Heart left ventricle (tissue), 16 donors: ENCODE measurements at regions of chr1 and their contacts with region 1.

Region 1: GRCh38 chr1:241611063-241611462 is 29.1 kb downstream of the CHML start:
- DNase-seq: no peak
- ATAC-seq: peak; percentile 78 to 91 (median 82)
- H3K4me3 ChIP-seq: no peak overlapping the region
- H3K27ac ChIP-seq: no peak overlapping the region
- H3K4me1 ChIP-seq: peaks cover 0 to 12% (median 0%) of the 10 kb centered on the region in 12 donors
- H3K27me3 ChIP-seq: no peaks in the 10 kb centered on the region
- CTCF ChIP-seq: peak; percentile 52 to 80 (median 68)
- POLR2A ChIP-seq: no peak

Region 2: DNA sequence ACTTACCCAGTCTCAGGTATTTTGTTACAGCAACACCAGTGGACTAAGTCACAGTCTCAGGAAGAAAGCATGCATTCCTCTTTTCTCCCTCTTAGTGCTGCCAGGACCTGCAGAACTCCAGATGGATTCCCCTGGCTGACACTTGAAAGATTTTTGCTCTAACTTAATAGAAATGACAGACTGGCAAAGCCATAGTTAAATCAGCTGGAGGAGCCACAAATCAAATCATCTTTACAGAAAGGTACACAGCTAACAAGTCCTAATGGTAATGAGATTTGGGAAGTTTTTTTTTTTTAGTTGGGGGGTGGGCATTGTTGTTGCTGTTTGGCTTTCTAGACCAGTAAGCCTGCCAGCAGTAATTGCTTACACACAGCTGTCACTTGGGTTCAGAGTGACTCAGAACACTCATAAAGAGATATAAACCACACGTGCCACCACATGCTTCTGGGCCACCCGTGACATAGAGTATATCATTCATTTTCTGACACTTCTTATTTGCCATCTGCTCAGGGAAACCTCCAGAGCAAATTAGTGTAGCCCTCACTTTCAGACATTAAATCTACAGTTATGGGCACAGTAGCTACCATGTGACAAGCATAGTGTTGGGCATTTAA is 163.9 kb before region 1 on chr1:
- intact Hi-C with region 1: no loop called
- DNase-seq: no peak
- ATAC-seq: no peak
- H3K4me3 ChIP-seq: no peak overlapping the region
- H3K27ac ChIP-seq: no peak overlapping the region
- H3K4me1 ChIP-seq: no peaks in the 10 kb centered on the region
- H3K27me3 ChIP-seq: no peaks in the 10 kb centered on the region
- CTCF ChIP-seq: no peak
- POLR2A ChIP-seq: no peak

Region 3: DNA sequence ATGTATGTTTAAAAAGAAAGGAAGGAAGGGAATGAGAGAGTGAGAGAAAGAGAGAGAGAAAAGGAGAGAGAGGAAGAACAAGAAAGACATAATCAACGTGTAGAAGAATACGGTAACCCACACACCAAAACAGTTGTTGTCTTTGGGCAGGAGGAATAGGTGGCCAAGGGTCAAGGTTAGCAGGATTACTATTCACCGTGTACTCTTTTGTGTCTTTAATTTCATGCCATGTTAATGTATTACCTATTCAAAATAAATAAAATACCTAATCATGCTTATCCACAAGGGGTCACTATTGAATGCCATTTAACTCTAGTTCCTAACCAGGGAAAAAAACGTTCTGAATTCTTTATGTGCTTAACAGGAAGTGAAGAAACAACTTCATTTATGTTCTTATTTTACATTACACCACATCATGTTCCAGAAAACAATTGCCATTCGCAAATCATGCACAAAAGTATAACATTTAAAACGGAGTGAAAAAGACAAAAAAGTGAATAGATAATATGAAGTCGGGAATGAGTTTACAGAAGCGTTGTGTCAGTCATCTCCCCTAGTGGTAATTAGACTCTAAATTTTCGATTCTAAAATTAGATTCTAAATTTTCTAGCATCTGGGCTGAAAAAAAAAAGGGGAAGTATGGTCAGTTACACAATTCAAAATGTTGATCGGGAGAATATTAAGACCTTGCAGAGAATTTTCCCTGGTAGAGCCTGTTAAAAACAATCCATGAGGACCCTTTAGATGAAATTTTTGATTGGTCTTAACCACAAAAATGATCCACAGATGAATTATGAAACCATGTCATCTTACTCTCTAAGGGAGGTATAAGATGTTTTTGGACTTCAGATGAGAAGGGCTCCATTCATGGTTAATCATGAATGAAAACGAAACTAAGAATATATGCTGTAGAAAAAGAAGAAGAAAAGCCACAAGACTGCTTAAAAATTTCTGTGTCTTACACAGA is 79.6 kb before region 1 on chr1:
- intact Hi-C with region 1: loop called in 1 of 10 experiments (anchors 10 kb)
- DNase-seq: no peak
- ATAC-seq: peak in 3 of 4 donors; percentile 68 to 87 (median 71)
- H3K4me3 ChIP-seq: peak overlapping the region; percentile 15 to 60 (median 48)
- H3K27ac ChIP-seq: peak overlapping the region in 4 of 12 donors; percentile 9 to 89 (median 38)
- H3K4me1 ChIP-seq: peaks cover 0 to 7% (median 0%) of the 10 kb centered on the region in 12 donors
- H3K27me3 ChIP-seq: peaks cover 0 to 24% (median 0%) of the 10 kb centered on the region in 9 donors
- CTCF ChIP-seq: peak; percentile 45 to 68 (median 62)
- POLR2A ChIP-seq: no peak

Region 4: DNA sequence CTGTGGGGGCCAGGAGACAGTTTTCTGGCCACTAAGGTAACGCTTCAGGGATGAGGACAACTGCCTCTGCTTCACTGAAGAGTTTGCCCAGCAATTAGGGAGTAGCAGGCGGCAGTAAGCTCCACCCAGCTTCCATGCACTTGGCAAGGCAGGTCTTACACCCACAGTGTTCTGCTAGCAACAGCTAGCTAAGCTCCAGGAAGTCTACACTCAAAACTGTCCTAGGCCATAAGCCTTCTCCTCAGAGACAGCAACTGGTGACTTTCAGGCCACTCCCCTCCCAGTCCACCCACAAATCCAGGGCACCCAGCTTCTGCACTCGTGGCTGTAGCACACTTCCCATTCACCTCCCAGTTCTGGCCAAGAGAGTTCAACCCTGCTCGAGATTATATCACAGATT is 31.6 kb before region 1 on chr1:
- intact Hi-C with region 1: no loop called
- DNase-seq: no peak
- ATAC-seq: no peak
- H3K4me3 ChIP-seq: no peak overlapping the region
- H3K27ac ChIP-seq: no peak overlapping the region
- H3K4me1 ChIP-seq: no peaks in the 10 kb centered on the region
- H3K27me3 ChIP-seq: no peaks in the 10 kb centered on the region
- CTCF ChIP-seq: no peak
- POLR2A ChIP-seq: no peak

Region 5: DNA sequence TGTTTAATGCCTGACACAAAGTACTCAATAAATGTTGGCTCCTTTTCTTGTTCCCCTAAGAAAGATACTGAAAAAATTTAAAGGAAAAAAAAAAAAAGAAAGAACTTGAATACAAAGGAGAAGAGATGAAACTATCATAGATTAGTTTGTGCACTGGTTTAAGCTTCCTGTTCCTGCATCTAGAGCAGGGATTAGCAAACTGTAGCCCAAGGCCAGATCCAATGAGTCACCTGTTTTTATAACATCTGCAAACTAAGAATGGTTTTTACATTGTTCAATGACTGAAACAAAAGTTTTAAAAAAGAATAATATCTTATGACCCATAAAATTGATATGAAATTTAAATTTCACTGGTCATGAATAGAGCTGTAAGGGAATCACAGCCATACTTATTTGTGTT is 91.4 kb after region 1 on chr1:
- intact Hi-C with region 1: no loop called
- DNase-seq: no peak
- ATAC-seq: no peak
- H3K4me3 ChIP-seq: no peak overlapping the region
- H3K27ac ChIP-seq: no peak overlapping the region
- H3K4me1 ChIP-seq: no peaks in the 10 kb centered on the region
- H3K27me3 ChIP-seq: no peaks in the 10 kb centered on the region
- CTCF ChIP-seq: no peak
- POLR2A ChIP-seq: no peak

Region 6: DNA sequence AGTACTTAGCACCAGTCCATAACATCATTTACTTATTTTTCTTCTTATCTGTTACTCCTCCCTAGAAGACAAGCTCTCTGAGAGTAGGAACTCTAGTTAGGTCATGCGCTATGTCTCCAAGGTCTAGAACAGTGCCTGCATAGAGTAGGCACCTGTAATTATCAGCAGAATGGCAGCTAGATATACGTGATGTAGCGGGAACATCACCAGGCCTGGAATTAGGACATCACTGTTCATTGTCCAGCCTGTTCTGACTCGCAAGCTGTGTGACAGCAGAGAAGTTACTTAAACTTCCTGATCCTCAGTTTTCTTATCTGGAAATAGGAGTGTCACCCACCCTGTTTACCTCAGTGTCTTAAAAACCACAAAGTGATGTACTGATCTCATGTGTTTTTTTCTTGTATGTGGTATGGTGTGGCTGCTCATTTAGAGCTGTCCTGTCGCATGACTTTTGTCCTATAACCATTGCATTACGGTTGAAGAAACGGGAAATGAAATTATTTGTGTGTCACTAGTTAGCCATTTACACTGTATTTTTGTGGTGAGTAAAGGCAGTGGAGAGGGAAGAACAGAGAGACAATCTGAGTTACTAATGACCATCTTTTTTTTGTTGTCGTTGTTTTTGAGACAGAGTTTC is 199.8 kb after region 1 on chr1:
- intact Hi-C with region 1: no loop called
- DNase-seq: no peak
- ATAC-seq: no peak
- H3K4me3 ChIP-seq: no peak overlapping the region
- H3K27ac ChIP-seq: no peak overlapping the region
- H3K4me1 ChIP-seq: no peaks in the 10 kb centered on the region
- H3K27me3 ChIP-seq: no peaks in the 10 kb centered on the region
- CTCF ChIP-seq: no peak
- POLR2A ChIP-seq: no peak

Region 7: GRCh38 chr1:241834733-241835377 is 223.8 kb after region 1 on chr1:
- intact Hi-C with region 1: loop called in 9 of 10 experiments (anchors 5 to 10 kb)
- DNase-seq: no peak
- ATAC-seq: no peak
- H3K4me3 ChIP-seq: no peak overlapping the region
- H3K27ac ChIP-seq: no peak overlapping the region
- H3K4me1 ChIP-seq: peaks cover 0 to 4% (median 0%) of the 10 kb centered on the region in 12 donors
- H3K27me3 ChIP-seq: peaks cover 0 to 8% (median 0%) of the 10 kb centered on the region in 9 donors
- CTCF ChIP-seq: peak in 11 of 12 donors; percentile 25 to 62 (median 41)
- POLR2A ChIP-seq: no peak

Region 8: DNA sequence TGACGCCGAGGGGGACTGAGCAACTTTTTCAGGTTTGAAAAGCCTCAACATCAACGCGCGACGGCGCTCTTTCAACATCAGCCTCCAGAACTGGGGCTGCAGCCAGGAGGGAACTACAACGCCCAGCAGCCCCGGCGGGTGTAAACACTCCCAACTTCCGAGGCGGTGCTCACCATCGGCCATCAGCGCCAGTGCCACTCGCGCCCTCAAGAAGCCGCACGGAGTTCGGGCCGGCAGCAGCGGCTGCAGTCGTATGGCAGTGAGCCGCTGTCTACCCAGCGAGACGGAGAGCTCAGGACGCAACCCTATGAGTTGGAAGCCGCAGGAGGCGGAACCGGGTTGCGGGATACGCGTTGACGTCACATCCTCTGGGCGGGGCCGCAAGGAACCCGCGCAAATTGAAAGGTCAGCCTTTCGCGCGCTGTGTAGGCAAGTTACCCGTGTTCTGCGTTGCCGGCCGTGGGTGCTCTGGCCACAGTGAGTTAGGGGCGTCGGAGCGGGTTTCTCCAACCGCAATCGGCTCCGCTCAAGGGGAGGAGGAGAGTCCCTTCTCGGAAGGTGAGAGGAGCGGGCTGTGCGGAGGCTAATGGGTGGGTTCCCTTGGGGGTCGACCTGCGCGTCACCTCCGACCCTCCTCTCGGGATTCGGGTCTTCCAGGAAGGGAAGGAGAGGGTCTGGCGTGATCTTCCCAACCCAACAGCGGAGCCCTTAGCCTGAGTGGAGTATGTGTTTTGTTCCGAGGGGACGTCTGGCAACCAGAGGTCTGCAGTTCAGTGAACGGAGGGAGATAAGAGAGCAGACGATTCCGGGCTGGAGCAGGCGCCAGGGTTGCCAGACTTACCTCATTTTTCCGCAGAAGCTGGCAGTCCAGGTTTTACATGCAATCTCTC is 237.0 kb after region 1 on chr1 and contains the start of gene EXO1:
- intact Hi-C with region 1: loop called in 2 of 10 experiments (anchors 5 to 10 kb)
- DNase-seq: peak; percentile 87 to 92 (median 89)
- ATAC-seq: peak; percentile 97 to 99 (median 99)
- H3K4me3 ChIP-seq: peak within 1 kb of the TSS; percentile 25 to 97 (median 84)
- H3K27ac ChIP-seq: peak within 1 kb of the TSS; percentile 89 to 100 (median 96)
- H3K4me1 ChIP-seq: peaks cover 0 to 14% (median 10%) of the 10 kb centered on the region in 12 donors
- H3K27me3 ChIP-seq: no peaks in the 10 kb centered on the region
- CTCF ChIP-seq: peak in 9 of 12 donors; percentile 14 to 56 (median 41)
- POLR2A ChIP-seq: peak in 1 of 2 donors; percentile 41
- total RNA-seq, gene EXO1: 0.15 to 4.1 (median 0.81) TPM in 5 of 9 donors, not detected in the others

Region 9: DNA sequence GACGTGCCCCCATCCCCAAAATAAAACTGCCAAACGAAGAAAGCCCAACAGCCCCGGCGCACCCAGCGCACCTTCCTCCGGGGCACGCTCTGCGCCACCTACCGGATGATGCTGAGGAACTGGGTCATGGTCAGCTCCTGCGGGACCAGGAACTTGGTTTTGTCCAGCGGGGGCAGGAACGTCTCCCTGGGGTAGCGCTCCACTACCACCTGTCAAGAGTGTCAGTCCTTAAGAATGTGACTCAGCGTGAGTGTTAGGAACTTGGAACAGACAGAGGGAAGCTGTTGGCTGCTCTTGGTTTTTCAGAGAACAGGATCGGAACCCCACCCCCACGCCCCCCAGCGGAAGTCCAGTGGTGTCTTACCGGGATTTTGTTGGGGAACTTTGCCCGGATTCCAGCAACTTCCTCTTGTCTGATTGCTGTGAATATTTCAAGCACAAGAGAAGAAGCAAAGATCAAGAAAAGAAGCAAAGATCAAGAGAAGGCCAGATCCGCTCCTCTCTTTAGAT is 387.4 kb after region 1 on chr1:
- intact Hi-C with region 1: loop called in 9 of 10 experiments (anchors 5 to 10 kb)
- DNase-seq: peak; percentile 67 to 83 (median 74)
- ATAC-seq: peak; percentile 43 to 93 (median 84)
- H3K4me3 ChIP-seq: peak overlapping the region in 10 of 12 donors; percentile 7 to 53 (median 35)
- H3K27ac ChIP-seq: peak overlapping the region in 6 of 12 donors; percentile 17 to 54 (median 46)
- H3K4me1 ChIP-seq: peaks cover 0 to 10% (median 0%) of the 10 kb centered on the region in 12 donors
- H3K27me3 ChIP-seq: no peaks in the 10 kb centered on the region
- CTCF ChIP-seq: peak; percentile 35 to 80 (median 61)
- POLR2A ChIP-seq: no peak

Region 10: GRCh38 chr1:242017584-242018233 is 406.6 kb after region 1 on chr1:
- intact Hi-C with region 1: loop called in 1 of 10 experiments (anchors 5 kb)
- DNase-seq: peak in 2 of 5 donors; percentile 22 to 24
- ATAC-seq: peak in 1 of 4 donors; percentile 59
- H3K4me3 ChIP-seq: no peak overlapping the region
- H3K27ac ChIP-seq: no peak overlapping the region
- H3K4me1 ChIP-seq: no peaks in the 10 kb centered on the region
- H3K27me3 ChIP-seq: no peaks in the 10 kb centered on the region
- CTCF ChIP-seq: peak; percentile 45 to 72 (median 60)
- POLR2A ChIP-seq: no peak